ENCODE measurements at regions of chr12 and their contacts with region 1.

Region 1: DNA sequence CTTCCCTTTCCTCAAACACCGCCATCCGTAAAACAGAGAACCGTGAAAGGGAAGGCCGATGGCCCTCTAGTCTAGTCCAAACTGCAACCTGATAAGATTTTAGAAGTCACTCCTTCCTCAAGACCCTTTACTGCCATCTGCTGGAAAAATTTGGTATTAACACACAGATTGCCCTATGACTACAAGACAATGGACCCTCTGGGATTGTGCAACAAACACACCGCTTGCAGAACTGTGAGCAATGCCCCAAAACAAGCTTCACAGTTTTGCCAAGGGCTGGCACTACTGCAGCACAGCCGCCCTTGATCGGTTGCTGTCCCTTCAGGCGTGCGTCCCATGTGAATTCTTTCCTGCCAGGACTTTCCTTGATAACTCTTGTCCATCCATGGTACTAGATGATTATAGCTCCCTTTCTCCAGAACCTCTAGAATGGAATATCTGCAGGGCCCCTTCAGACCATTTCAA is 23.1 kb downstream of the LLPH start:
- DNase-seq: peak; percentile 21 to 85
- ATAC-seq: peak; percentile 88 to 98 (median 94)
- H3K4me3 ChIP-seq: no peak overlapping the region
- H3K4me3 Mint-ChIP-seq: no peak overlapping the region
- H3K27ac ChIP-seq: no peak overlapping the region
- H3K27ac Mint-ChIP-seq: no peak overlapping the region
- H3K4me1 ChIP-seq: no peaks in the 10 kb centered on the region
- H3K4me1 Mint-ChIP-seq: peaks cover 6% of the 10 kb centered on the region in 2 donors
- H3K27me3 ChIP-seq: no peaks in the 10 kb centered on the region
- H3K27me3 Mint-ChIP-seq: peaks cover 6 to 9% of the 10 kb centered on the region in 2 donors
- CTCF ChIP-seq: peak; percentile 79

Region 2: GRCh38 chr12:64890873-64891468 is 1216.5 kb before region 1 on chr12:
- intact Hi-C with region 1: loop called (anchors 1 kb)
- DNase-seq: peak in 1 of 2 donors; percentile 77
- ATAC-seq: peak; percentile 52 to 74 (median 71)
- H3K4me3 ChIP-seq: no peak overlapping the region
- H3K4me3 Mint-ChIP-seq: no peak overlapping the region
- H3K27ac ChIP-seq: no peak overlapping the region
- H3K27ac Mint-ChIP-seq: no peak overlapping the region
- H3K4me1 ChIP-seq: no peaks in the 10 kb centered on the region
- H3K4me1 Mint-ChIP-seq: peaks cover 5% of the 10 kb centered on the region in 2 donors
- H3K27me3 ChIP-seq: peaks cover 4% of the 10 kb centered on the region
- H3K27me3 Mint-ChIP-seq: peaks cover 15 to 21% of the 10 kb centered on the region in 2 donors
- CTCF ChIP-seq: peak; percentile 89

Region 3: DNA sequence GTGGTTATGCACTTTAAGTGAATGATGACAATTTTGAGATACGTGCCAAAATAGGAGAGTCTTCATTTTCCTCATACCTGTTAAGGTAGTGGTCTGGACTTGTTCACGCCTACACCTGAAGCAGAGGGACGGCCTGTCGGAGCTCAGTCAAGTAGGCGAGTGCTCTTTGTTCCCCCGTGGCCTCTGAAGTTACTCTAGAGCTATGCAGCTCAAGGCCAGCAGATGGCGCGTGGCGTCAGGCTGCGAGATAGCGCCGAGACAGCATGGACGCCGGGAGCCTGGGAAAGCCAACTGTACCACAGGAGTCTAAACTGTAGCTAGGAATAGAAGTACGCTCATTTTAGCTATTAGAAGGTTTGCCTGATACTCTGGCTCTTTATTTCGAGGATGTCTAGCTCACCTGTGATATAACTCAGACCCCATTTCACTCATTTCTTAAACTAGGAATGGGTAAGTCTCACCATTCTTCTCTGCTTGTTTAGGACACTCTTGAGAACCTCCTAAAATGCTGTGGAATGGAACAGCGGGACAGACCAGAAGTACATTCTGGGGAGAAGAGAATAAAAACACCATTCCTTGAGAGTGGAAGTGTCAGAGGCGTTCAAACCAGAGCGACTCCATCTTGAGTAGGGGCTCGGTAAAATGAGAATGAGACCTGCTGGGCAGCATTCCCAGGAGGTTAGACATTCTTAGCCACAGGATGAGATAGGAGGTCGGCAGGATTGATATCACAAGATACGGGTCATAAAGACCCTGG is 550.6 kb before region 1 on chr12:
- intact Hi-C with region 1: loop called (anchors 5 kb)
- DNase-seq: peak; percentile 52 to 71
- ATAC-seq: peak; percentile 82 to 98 (median 85)
- H3K4me3 ChIP-seq: no peak overlapping the region
- H3K4me3 Mint-ChIP-seq: no peak overlapping the region
- H3K27ac ChIP-seq: no peak overlapping the region
- H3K27ac Mint-ChIP-seq: no peak overlapping the region
- H3K4me1 ChIP-seq: no peaks in the 10 kb centered on the region
- H3K4me1 Mint-ChIP-seq: peaks cover 0 to 7% of the 10 kb centered on the region in 2 donors
- H3K27me3 ChIP-seq: peaks cover 2% of the 10 kb centered on the region
- H3K27me3 Mint-ChIP-seq: peaks cover 5 to 21% of the 10 kb centered on the region in 2 donors
- CTCF ChIP-seq: peak; percentile 77

Region 4: DNA sequence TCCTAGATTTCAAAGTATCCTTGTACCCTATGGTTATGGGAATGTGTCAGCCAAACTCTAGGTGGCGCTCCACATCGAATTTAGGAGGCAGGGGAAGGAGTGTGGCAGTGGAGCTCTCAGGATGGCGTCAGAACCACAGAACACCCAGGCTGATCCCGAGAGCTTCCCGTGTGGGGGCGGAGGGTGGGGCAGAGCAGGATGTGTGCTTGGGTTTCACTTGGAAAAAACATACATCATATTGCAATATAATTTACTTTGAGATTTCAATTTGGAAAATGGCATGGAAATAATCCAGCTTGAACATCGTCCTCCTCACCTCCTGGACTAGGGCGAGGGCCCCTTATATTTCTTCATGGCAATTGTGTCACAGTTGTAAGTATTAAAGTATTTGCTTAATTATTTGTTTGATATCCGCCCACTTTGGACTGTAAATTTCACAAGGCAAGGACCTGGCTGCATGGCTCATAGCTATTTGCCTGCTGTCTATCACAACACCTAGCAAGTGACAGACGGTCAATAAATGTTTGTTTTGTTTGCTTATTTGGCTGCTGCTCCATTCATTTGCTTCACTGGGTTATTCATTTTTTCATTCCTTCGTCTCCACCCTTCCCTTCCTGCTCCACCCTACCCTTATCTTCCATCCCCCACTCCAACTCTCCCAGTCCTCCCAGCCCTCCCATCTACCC is 504.7 kb before region 1 on chr12:
- intact Hi-C with region 1: loop called (anchors 1 kb)
- DNase-seq: peak; percentile 15 to 19
- ATAC-seq: peak in 1 of 3 donors; percentile 74
- H3K4me3 ChIP-seq: no peak overlapping the region
- H3K4me3 Mint-ChIP-seq: no peak overlapping the region
- H3K27ac ChIP-seq: no peak overlapping the region
- H3K27ac Mint-ChIP-seq: no peak overlapping the region
- H3K4me1 ChIP-seq: no peaks in the 10 kb centered on the region
- H3K4me1 Mint-ChIP-seq: no peaks in the 10 kb centered on the region
- H3K27me3 ChIP-seq: peaks cover 2% of the 10 kb centered on the region
- H3K27me3 Mint-ChIP-seq: peaks cover 18 to 24% of the 10 kb centered on the region in 2 donors
- CTCF ChIP-seq: peak; percentile 27

Measured in natural killer cell (primary cell).